AG04449 (cell line): ENCODE measurements at regions of chr7 and their contacts with region 1.

Region 1: DNA sequence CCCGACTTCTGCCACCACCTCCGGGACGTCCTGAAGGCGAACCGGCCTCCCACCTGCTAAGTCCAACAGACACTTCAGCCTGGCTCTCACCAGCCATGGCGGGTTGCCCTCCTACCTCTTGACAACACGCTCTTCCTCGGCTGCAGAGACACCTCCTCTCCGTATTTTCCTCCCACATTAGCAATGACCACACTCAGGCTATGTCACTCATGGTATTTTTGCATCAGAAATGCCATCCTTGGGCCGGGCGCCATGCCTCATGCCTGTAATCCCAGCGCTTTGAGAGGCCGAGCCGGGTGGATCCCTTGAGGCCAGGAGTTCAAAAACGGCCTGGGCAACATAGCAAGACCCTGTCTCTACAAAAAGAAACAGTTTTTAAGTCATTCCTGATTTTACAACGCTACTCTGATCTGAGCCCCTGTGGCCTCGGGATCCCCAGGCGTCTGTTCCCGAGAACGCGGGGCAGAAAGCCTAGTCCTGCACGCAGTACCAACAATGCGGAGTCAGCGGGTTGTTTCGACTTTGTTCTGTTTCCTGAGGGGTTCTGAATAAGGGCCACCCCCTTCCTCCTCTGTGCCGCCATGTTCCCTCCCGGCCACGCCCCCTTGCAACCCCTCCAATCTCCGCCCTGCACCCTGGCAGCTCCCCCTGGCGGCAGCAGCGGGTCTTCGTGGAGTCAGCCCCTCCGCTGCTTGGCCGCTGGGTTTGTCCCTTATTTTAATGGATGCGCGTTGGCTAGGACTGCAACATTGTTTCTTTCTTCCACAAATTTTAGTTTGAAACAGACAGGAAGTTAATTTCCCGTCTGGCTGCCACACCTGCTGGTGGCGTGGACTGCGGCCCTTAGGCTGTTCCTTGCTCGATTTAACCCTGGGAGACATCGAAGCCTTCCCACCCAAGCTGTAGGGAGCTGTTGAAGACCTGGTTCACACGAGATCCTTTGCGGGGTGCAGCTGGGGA is 9.7 kb upstream of the ZFAND2A start:
- DNase-seq: no peak
- H3K4me3 ChIP-seq: peak overlapping the region; percentile 54
- CTCF ChIP-seq: peak; percentile 92

Region 2: DNA sequence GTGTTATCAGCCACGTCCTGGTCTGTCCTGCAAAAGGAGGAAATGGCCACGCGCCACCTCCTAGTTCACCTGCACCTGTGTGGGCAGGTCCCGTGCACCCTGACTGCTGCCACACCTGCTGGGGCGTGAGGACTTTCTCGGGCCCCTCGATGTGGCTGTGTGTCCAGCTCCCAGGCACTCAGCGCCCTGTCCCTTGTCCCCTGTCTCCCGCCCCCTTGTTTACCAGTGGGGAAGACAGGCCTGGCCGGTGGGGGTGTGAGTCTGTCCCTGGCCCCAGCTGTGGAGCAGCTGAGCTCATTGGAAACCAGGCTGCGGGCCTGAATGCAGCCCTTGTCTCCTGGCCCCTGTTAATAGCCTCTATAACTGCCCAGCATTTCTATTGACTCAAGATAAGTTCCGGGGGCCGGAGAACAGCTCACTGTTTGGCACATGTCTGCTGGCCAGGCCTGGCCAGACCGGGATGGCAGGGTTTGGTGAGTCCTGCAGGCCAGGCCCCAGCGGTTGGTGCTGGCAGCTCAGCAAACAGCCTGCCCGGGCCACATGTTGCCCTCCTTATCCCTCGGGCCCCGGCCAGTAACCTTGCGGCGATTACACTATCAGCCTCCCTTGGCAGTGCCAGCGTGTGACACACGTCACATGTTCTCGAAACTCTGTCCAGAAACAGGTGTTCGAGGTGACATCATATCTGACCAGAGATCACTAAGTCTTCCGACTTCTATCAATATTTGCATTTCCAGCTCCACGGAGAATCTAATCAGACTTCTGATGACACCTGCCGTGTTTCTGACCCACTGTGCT is 827.6 kb before region 1 on chr7:
- CTCF ChIA-PET with region 1: no interaction called
- POLR2A ChIA-PET with region 1: no interaction called
- DNase-seq: no peak
- H3K4me3 ChIP-seq: no peak overlapping the region
- CTCF ChIP-seq: no peak

Region 3: GRCh38 chr7:1137510-1138167 is 32.0 kb before region 1 on chr7:
- CTCF ChIA-PET with region 1: interaction called, 12 read pairs
- POLR2A ChIA-PET with region 1: no interaction called
- DNase-seq: no peak
- H3K4me3 ChIP-seq: peak overlapping the region; percentile 85
- CTCF ChIP-seq: no peak

Region 4: GRCh38 chr7:1181640-1182039 is 12.0 kb after region 1 on chr7:
- CTCF ChIA-PET with region 1: interaction called, 65 read pairs
- POLR2A ChIA-PET with region 1: no interaction called
- DNase-seq: no peak
- H3K4me3 ChIP-seq: no peak overlapping the region
- CTCF ChIP-seq: no peak